G401 (cell line): ENCODE measurements at regions of chr19 and their contacts with region 1.

Region 1: DNA sequence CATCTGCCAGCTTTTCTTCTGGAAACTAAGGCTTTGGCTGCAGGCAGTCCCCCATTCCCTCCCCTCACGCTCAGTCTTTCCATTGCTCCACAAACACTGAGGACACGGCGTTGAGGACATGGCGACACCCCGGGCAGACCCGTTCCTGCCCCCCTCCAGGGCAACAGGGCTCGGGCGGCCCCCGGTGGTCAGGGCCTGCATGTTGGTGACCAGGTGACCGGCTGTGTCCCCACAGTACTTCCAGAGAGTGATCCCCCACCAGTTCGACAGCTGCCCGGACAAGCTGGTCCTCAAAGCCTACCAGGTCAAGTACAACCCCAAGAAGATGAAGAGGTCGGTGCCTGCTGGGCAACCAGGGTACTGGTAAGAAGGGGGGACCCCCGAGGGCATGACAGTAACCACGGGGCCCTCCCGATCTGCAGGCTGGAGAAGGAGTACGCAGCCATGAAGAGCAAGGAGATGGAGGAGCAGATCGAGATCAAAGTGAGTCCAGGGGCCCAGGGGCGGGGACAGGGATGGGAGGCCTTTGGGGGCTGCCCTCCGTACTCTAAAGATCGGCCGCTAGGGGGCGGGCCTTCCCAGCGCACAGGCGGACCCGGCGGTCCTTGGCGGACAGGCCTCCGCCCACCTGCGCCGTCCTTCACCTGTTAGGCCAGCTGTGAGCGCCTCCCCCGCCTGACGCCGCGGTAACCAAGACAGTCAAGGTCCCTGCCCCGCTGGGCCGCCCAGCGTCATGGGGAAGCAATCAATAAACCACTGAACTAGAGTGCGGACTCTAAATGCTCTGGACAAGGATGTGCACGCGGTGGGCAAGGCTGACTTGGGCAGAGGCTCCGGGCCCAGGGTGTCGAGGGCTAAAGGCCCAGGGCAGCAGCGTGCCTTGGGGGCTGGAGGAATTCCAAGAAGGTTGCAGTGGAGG is 21.1 kb downstream of the PRR36 start:
- DNase-seq: peak; percentile 73

Region 2: GRCh38 chr19:7685541-7686416 is 167.3 kb before region 1 on chr19:
- in situ Hi-C with region 1: no loop called
- DNase-seq: no peak

Region 3: DNA sequence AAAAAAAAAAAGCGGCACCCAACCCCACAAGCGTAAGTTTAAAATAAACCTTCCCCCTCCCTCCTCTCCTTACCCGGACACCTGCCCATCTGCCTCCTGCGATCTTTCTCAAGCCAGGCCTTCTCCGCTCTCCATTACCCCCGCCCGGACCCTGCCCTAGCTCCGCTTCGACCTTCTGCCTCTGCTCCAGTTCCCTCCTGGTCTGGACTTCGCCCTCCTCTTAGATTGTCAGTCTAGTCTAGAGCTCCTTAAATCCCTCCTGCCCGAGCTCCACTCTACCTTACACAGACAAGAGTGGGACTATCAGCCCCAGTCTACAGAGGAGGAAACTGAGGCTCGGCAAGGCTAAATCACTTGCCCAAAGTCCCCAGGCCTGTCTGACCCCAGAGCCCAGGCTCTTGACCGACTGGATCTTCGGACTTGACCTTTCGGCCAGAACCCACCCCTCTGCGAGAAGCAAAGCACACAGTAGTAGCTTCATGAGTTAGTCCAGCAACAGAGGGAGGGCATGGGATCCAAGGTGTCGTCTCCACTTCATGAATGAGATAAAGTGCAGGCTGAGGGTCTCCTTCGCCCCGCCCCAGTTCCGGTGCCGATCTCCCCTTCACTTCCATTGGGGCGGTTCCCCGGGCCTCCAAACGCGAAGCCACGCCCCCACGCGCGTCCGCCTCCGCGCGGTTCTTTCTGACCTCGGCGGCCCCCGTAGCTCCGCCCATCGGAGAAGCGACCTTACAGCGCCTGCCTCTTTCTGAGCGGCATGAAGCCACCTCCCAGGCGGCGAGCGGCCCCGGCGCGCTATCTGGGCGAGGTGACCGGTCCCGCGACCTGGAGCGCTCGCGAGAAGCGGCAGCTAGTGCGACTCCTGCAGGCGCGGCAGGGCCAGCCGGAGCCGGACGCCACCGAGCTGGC is 66.8 kb after region 1 on chr19 and contains the start of gene SNAPC2:
- in situ Hi-C with region 1: loop called (anchors 5 kb)
- DNase-seq: peak; percentile 87
- total RNA-seq, gene SNAPC2: 35.1 and 37.8 TPM in 2 replicates